Activated CD8-positive, alpha-beta T cell treated with anti-CD3 and anti-CD28 coated beads for 36 hours (primary cell): ENCODE measurements at regions of chr15 and their contacts with region 1.

Region 1: DNA sequence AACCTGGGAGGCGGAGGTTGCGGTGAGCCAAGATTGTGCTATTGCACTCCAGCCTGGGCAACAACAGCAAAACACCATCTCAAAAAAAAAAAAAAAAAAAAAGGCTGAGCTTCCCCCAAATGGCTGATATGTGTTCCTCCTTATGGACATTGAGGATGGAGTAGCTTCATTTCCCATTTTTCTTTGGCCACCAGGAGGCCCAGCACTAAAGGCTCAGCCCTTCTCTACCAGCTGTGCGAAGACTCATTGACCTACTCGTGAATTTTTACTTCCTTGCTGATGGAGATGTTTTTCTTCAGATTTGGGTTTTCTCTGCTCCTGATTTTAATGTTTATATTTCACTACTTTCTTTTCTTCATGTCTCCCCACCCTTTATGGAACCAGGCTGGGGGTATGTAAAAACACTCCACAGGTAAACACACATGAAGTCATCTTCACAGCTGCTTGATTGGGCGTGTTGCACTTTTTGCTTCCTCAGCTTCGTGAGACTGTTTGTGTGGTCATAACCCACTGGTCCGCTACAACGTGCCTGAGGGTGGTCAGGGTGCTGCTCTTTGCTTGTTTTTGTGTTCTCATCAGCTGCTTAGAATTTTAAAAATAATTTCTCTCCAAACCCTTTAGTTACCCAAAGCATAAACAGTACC is 13.5 kb downstream of the SEMA4B start:
- DNase-seq: no peak
- ATAC-seq: no peak
- H3K4me3 Mint-ChIP-seq: no peak overlapping the region
- H3K27ac Mint-ChIP-seq: no peak overlapping the region
- H3K4me1 Mint-ChIP-seq: peaks cover 17% of the 10 kb centered on the region
- H3K27me3 Mint-ChIP-seq: no peaks in the 10 kb centered on the region
- CTCF ChIP-seq: no peak

Region 2: DNA sequence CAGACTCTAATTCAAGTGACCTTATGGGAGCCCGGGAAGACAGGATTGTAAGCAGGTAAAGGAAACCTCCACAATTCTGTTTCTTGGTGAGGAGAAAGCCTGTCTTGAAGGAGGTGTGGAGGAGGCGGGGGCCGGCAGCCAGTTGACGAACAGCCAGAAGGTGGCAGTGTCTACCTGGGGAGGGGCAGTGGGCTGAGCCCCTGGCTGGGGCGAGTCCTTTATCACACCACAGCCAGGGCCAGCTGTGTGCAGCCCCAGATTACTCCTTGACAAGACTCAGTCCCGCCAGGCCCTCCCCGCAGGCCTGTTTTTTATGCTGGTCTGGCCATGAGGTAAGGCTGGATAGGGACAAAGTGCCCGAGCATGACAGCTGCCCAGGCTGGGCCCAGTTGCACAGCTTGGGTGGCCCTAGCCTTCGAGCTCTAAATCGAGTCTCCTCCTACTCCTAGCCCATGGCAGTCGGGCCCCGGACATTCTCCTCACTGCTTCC is 71.5 kb before region 1 on chr15:
- CTCF ChIA-PET with region 1: interaction called, 15 read pairs
- POLR2A ChIA-PET with region 1: no interaction called
- intact Hi-C with region 1: no loop called
- DNase-seq: peak; percentile 80
- ATAC-seq: peak; percentile 88
- H3K4me3 Mint-ChIP-seq: no peak overlapping the region
- H3K27ac Mint-ChIP-seq: peak overlapping the region; percentile 30
- H3K4me1 Mint-ChIP-seq: peaks cover 24% of the 10 kb centered on the region
- H3K27me3 Mint-ChIP-seq: no peaks in the 10 kb centered on the region
- CTCF ChIP-seq: peak; percentile 84